Mucosa of descending colon (tissue), 3 donors: ENCODE measurements at regions of chr10 and their contacts with region 1.

Region 1: DNA sequence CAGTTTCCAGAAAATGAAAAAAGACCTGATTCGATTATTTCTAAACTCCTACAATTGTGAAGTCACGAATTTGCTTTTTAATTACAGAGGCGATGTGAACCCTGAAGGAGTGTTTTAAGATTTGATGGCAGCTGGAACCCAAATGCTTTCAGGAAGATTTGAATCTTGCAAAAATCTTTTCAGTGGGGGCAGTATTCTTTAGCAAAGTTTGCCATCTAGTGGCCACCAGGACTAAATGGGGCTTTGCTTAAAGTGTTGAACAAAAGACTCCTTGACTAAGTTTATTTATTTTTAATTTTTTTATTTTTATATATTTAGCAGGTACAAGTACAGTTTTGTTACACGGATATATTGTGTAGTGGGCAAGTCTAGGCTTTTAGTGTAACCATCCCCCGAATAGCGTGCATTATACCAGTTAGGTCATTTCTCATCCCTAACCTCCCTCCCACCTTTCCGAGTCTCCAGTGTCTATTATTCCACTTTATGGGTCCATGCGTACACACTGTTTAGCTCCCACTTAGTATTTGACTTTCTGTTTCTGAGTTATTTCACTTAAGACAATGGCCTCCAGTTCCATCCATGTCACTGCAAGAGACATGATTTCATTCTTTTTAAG is 98.8 kb downstream of the CACNB2 start:
- DNase-seq: peak in 1 of 3 donors; percentile 30
- ATAC-seq: peak; percentile 26
- H3K4me3 ChIP-seq: no peak overlapping the region
- H3K4me1 ChIP-seq: no peaks in the 10 kb centered on the region
- CTCF ChIP-seq: peak; percentile 30

Region 2: GRCh38 chr10:17847585-17848296 is 391.2 kb before region 1 on chr10:
- intact Hi-C with region 1: loop called in 1 of 2 experiments (anchors 10 kb)
- DNase-seq: no peak
- ATAC-seq: peak; percentile 38
- H3K4me3 ChIP-seq: no peak overlapping the region
- H3K4me1 ChIP-seq: no peaks in the 10 kb centered on the region
- CTCF ChIP-seq: no peak